A549 (cell line): ENCODE measurements at regions of chr20 and their contacts with region 1.

Region 1: GRCh38 chr20:33097001-33097400 is 17.6 kb downstream of the BPIFB4 start:
- DNase-seq: no peak
- ATAC-seq: no peak
- H3K4me3 ChIP-seq: no peak overlapping the region
- H3K27ac ChIP-seq: no peak overlapping the region
- H3K4me1 ChIP-seq: no peaks in the 10 kb centered on the region
- CTCF ChIP-seq: no peak
- EP300 ChIP-seq: no peak
- POLR2A ChIP-seq: no peak
- RAD21 ChIP-seq: no peak

Region 2: DNA sequence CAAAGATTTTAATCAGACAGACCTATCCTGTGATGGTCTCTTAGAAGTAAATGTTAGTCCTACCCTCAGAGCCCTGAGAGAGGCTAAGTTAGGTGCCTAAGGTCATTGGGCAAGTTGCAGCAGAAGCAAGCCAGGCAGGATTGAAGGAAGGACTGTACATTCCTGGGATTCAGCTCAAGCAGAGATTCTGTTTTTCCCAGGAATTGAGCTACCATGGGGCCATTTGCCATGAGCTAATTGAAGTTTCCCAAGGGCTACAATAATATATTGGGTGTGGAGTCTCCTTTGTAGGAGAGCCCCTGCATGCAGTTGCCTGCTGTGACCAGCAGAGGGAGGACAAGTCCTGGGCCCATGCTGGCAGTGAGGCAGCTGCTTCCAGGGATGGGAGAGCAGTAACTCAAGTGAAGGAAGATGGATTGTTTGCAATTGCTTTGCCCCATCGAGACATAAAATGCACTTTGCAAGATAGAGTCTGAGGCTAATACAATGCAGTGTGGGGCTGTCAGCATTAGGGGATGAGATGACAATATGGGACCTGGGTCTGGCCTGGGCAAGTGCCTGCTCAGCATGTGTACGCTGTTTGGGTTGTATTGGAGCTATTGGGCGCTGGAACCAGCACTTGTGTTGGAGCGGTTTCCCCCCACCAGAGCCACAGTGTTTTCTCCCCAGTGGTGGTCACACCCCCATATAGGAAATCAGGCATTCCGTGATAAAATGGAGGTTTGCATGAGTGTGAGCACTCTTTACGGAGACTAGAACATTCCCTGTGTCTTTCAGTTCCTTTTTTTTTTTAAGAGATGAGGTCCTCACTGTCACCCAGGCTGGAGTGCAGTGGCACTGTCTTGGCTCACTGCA is 306.9 kb before region 1 on chr20:
- CTCF ChIA-PET with region 1: interaction called, 19 read pairs
- POLR2A ChIA-PET with region 1: no interaction called
- DNase-seq: peak; percentile 71 to 92
- ATAC-seq: peak; percentile 96
- H3K4me3 ChIP-seq: no peak overlapping the region
- H3K27ac ChIP-seq: no peak overlapping the region
- H3K4me1 ChIP-seq: no peaks in the 10 kb centered on the region
- CTCF ChIP-seq: peak; percentile 82
- EP300 ChIP-seq: no peak
- POLR2A ChIP-seq: no peak
- RAD21 ChIP-seq: peak; percentile 66 to 83

Region 3: DNA sequence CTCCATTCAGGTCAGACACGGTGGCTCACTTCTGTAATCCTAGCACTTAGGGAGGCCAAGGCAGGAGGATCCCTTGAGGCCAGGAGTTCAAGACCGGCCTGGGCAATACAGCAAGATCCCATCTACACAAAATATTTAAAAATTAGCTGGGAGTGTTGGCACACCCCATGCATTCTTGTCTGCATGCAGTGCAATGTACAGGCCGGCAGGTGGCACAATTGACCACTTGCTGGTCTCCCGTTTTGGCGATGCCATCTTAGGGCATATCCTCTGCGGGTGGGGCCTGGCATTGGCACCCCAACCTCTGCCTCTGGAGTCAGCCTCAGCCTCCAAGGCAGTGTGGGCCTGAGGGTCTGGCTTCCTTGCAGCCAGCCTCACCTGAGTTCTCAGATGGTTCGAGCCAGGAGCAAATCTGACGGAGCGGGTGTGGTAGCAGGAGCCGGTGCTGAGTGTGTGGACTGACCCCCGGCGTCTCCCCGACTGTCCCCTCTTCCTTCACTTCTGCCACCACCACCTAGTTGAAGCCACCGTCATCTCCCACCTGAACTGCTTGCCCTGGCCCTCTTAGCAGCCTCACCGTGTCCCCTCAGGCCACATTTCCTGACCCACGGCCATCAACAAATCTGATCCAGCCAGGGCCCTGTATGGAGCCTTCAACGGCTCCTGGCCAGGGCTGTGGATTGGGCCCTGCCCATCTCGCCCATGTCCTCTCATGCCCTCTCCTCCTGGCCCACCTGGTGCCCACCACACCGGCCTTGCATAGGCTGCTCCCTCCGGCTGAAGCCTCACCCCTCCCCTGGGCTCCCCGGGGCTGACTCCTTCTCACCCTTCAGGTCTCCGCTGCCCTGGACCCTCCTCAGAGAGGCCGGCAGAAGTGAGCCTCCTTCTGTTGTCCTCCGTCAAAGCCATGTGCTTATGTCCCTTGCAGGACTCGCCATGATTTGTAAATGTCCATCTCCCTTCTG is 194.3 kb before region 1 on chr20:
- CTCF ChIA-PET with region 1: interaction called, 49 read pairs
- POLR2A ChIA-PET with region 1: no interaction called
- DNase-seq: peak; percentile 58 to 66
- ATAC-seq: peak; percentile 77 to 92; a peak in 5 of 6 replicates
- H3K4me3 ChIP-seq: no peak overlapping the region
- H3K27ac ChIP-seq: no peak overlapping the region
- H3K4me1 ChIP-seq: no peaks in the 10 kb centered on the region
- CTCF ChIP-seq: peak; percentile 86
- EP300 ChIP-seq: no peak
- POLR2A ChIP-seq: no peak
- RAD21 ChIP-seq: peak; percentile 89 to 94

Region 4: DNA sequence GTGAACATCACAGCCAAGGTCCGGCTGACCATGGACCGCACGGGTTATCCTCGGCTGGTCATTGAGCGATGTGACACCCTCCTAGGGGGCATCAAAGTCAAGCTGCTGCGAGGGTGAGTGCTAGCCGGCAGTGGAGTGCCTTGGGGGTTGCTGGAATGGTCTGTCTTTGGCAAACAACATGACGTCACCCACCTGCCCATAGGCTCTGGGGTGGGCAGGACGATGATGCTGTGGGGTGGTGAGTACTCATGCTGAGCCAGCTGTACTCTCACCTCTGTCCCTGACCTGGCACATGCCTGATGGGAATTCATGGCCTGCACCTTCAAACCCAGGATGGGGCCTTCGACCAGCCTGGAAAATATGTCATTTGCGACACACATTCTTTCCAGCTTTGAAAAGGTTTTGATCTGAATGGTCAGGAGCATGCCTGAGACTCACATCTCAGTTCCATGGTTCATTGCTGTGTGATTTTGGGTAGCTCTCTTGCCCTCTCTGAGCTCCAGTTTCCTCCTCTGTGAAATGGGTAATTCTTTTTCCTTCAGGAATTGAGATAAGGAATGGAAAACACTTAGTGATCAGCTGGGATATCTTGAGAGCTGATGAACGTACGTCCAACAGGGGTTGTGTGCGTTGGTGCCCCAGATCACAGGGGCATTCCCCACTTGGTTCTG is 10.8 kb before region 1 on chr20:
- CTCF ChIA-PET with region 1: interaction called, 15 read pairs
- POLR2A ChIA-PET with region 1: no interaction called
- DNase-seq: no peak
- ATAC-seq: no peak
- H3K4me3 ChIP-seq: no peak overlapping the region
- H3K27ac ChIP-seq: no peak overlapping the region
- H3K4me1 ChIP-seq: no peaks in the 10 kb centered on the region
- CTCF ChIP-seq: no peak
- EP300 ChIP-seq: no peak
- POLR2A ChIP-seq: no peak
- RAD21 ChIP-seq: no peak

Region 5: GRCh38 chr20:33211817-33212424 is 114.9 kb after region 1 on chr20:
- CTCF ChIA-PET with region 1: interaction called, 36 read pairs
- POLR2A ChIA-PET with region 1: interaction called, 3 read pairs
- DNase-seq: peak; percentile 83 to 84
- ATAC-seq: peak; percentile 91 to 98
- H3K4me3 ChIP-seq: no peak overlapping the region
- H3K27ac ChIP-seq: no peak overlapping the region
- H3K4me1 ChIP-seq: no peaks in the 10 kb centered on the region
- CTCF ChIP-seq: peak; percentile 55
- EP300 ChIP-seq: no peak
- POLR2A ChIP-seq: no peak
- RAD21 ChIP-seq: peak; percentile 64 to 72